ENCODE measurements at regions of chr15 and their contacts with region 1.

Region 1: GRCh38 chr15:43329960-43330779 is at the start of gene LCMT2:
- DNase-seq: peak; percentile 91 to 97 (median 94)
- ATAC-seq: peak; percentile 94
- H3K4me3 ChIP-seq: peak within 1 kb of the TSS; percentile 60
- H3K27ac ChIP-seq: peak within 1 kb of the TSS; percentile 96
- H3K4me1 ChIP-seq: peaks cover 14 to 15% of the 10 kb centered on the region in 2 experiments; a peak in 4 of 5 replicates
- H3K27me3 ChIP-seq: no peaks in the 10 kb centered on the region
- CTCF ChIP-seq: 0 out of 6 replicates have a peak, but pooled peaks of 1 of the 3 experiments have one; percentile 4
- EP300 ChIP-seq: no peak
- POLR2A ChIP-seq: peak; percentile 99
- RAD21 ChIP-seq: no peak
- polyA plus RNA-seq, gene LCMT2: 2.5 to 2.9 TPM

Region 2: GRCh38 chr15:43008150-43008549 is 322.0 kb before region 1 on chr15:
- CTCF ChIA-PET with region 1: no interaction called
- POLR2A ChIA-PET with region 1: no interaction called
- in situ Hi-C with region 1: no loop called
- intact Hi-C with region 1: no loop called
- DNase-seq: no peak
- ATAC-seq: no peak
- H3K4me3 ChIP-seq: no peak overlapping the region
- H3K27ac ChIP-seq: no peak overlapping the region
- H3K4me1 ChIP-seq: peaks cover 0 to 4% of the 10 kb centered on the region in 2 experiments; a peak in 2 of 5 replicates
- H3K27me3 ChIP-seq: no peaks in the 10 kb centered on the region
- CTCF ChIP-seq: no peak
- EP300 ChIP-seq: no peak
- POLR2A ChIP-seq: no peak
- RAD21 ChIP-seq: no peak

Region 3: GRCh38 chr15:43370975-43371974 is 41.1 kb after region 1 on chr15 and contains the starts of genes TUBGCP4 and ZSCAN29:
- CTCF ChIA-PET with region 1: no interaction called
- POLR2A ChIA-PET with region 1: no interaction called
- in situ Hi-C with region 1: no loop called
- intact Hi-C with region 1: loop called (anchors 1 kb)
- DNase-seq: peak; percentile 91 to 96 (median 96)
- ATAC-seq: peak; percentile 92
- H3K4me3 ChIP-seq: peak within 1 kb of the TSS; percentile 74
- H3K27ac ChIP-seq: peak within 1 kb of the TSS; percentile 89
- H3K4me1 ChIP-seq: peaks cover 13 to 16% of the 10 kb centered on the region in 2 experiments; a peak in 4 of 5 replicates
- H3K27me3 ChIP-seq: no peaks in the 10 kb centered on the region
- CTCF ChIP-seq: peak; percentile 66 to 72 (median 71)
- EP300 ChIP-seq: no peak
- POLR2A ChIP-seq: peak; percentile 90
- RAD21 ChIP-seq: no peak
- polyA plus RNA-seq, gene TUBGCP4: 10.7 to 13.1 TPM
- polyA plus RNA-seq, gene ZSCAN29: 2.5 to 2.7 TPM

Measured in K562 (cell line).